Calu3 (cell line): ENCODE measurements at regions of chrX and their contacts with region 1.

Region 1: DNA sequence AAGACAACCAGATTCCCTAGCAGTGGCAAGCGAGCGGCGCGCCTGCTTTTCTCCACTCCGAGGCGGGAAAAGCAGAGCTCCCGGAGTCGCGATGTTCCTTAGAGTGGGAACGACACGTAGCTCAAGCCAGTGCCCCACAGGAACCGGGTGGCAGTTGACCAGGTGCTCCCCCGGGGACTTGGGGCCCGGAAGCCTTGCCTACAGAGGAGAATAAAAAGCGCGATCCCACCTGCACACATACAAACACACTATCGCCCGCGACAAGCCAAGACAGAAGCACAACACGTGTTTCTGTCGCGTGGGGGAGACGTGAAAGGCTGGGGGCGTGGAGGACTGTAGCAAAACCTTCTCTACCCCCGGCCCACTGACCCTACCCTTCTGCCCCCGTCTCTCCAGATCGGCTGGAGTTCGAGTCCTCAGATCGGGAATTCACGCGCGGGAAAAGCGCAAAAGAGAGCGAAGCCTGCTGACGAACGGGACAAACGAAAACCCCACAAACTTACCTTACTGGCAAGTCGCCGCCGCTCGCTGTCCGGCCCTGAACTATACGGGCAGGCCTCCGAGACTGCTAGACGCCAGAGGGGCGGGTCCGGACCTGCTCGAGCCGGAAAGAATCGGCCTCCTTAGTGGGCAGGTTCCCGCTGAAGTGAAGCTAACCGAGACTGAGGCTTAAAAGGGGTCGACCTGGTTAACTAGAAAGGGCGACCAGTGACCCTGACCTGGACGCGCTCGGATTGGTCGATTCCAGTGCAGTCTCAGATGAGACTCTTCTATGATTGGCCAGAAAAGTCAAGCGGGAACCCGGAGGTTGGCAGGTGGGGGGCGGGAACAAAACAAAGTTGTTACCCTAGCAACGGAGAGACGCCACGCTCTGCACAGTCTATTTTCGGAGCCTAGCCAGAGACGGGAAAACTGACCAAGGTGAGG is at the starts of genes DNAAF6 and NUP62CL:
- DNase-seq: peak; percentile 84
- H3K4me3 Mint-ChIP-seq: peak within 1 kb of the TSS; percentile 83
- H3K27ac Mint-ChIP-seq: peak within 1 kb of the TSS; percentile 85
- H3K4me1 Mint-ChIP-seq: no peaks in the 10 kb centered on the region
- H3K27me3 Mint-ChIP-seq: no peaks in the 10 kb centered on the region
- CTCF ChIP-seq: no peak
- total RNA-seq, gene DNAAF6: not detected in 2 replicates
- total RNA-seq, gene NUP62CL: 14.6 and 18.0 TPM in 2 replicates

Region 2: GRCh38 chrX:107118322-107119147 is 87.5 kb before region 1 on chrX and contains the start of gene RBM41:
- CTCF ChIA-PET with region 1: no interaction called
- intact Hi-C with region 1: loop called (anchors 5 kb)
- DNase-seq: peak; percentile 71
- H3K4me3 Mint-ChIP-seq: peak within 1 kb of the TSS; percentile 92
- H3K27ac Mint-ChIP-seq: peak within 1 kb of the TSS; percentile 89
- H3K4me1 Mint-ChIP-seq: peaks cover 38% of the 10 kb centered on the region
- H3K27me3 Mint-ChIP-seq: no peaks in the 10 kb centered on the region
- CTCF ChIP-seq: no peak
- total RNA-seq, gene RBM41: 36.0 and 41.1 TPM in 2 replicates

Region 3: GRCh38 chrX:107135049-107135964 is 70.7 kb before region 1 on chrX:
- CTCF ChIA-PET with region 1: no interaction called
- intact Hi-C with region 1: loop called (anchors 5 kb)
- DNase-seq: peak; percentile 61
- H3K4me3 Mint-ChIP-seq: peak overlapping the region; percentile 57
- H3K27ac Mint-ChIP-seq: peak overlapping the region; percentile 97
- H3K4me1 Mint-ChIP-seq: peaks cover 42% of the 10 kb centered on the region
- H3K27me3 Mint-ChIP-seq: no peaks in the 10 kb centered on the region
- CTCF ChIP-seq: no peak